H1 (cell line): ENCODE measurements at regions of chr14 and their contacts with region 1.

Region 1: GRCh38 chr14:94136575-94137331 is 7.3 kb upstream of the IFI27L2 start:
- DNase-seq: peak; percentile 75 to 97
- H3K4me3 ChIP-seq: no peak overlapping the region
- H3K27ac ChIP-seq: no peak overlapping the region
- H3K4me1 ChIP-seq: peaks cover 5 to 17% (median 8%) of the 10 kb centered on the region in 4 experiments; a peak in 6 of 7 replicates
- H3K27me3 ChIP-seq: no peaks in the 10 kb centered on the region
- CTCF ChIP-seq: peak; percentile 94 to 99 (median 98)
- EP300 ChIP-seq: no peak
- POLR2A ChIP-seq: no peak
- RAD21 ChIP-seq: peak; percentile 91 to 95

Region 2: GRCh38 chr14:93926873-93927799 is 209.6 kb before region 1 on chr14 and contains the start of gene FAM181A:
- CTCF ChIA-PET with region 1: no interaction called
- POLR2A ChIA-PET with region 1: no interaction called
- DNase-seq: no peak
- H3K4me3 ChIP-seq: no peak within 1 kb of the TSS
- H3K27ac ChIP-seq: no peak within 1 kb of the TSS
- H3K4me1 ChIP-seq: peaks cover 0 to 5% (median 0%) of the 10 kb centered on the region in 4 experiments; a peak in 1 of 7 replicates
- H3K27me3 ChIP-seq: no peaks in the 10 kb centered on the region
- CTCF ChIP-seq: no peak
- EP300 ChIP-seq: no peak
- POLR2A ChIP-seq: no peak
- RAD21 ChIP-seq: no peak
- total RNA-seq, gene FAM181A: not detected in 2 replicates

Region 3: GRCh38 chr14:94021001-94021400 is 115.8 kb before region 1 on chr14:
- CTCF ChIA-PET with region 1: interaction called, 15 read pairs
- POLR2A ChIA-PET with region 1: no interaction called
- DNase-seq: no peak
- H3K4me3 ChIP-seq: no peak overlapping the region
- H3K27ac ChIP-seq: no peak overlapping the region
- H3K4me1 ChIP-seq: peaks cover 0 to 18% (median 10%) of the 10 kb centered on the region in 4 experiments; a peak in 4 of 7 replicates
- H3K27me3 ChIP-seq: no peaks in the 10 kb centered on the region; a peak in 1 of 7 replicates
- CTCF ChIP-seq: no peak
- EP300 ChIP-seq: no peak
- POLR2A ChIP-seq: no peak
- RAD21 ChIP-seq: no peak

Region 4: GRCh38 chr14:94051115-94051514 is 85.6 kb before region 1 on chr14:
- CTCF ChIA-PET with region 1: interaction called, 148 read pairs
- POLR2A ChIA-PET with region 1: no interaction called
- DNase-seq: no peak
- H3K4me3 ChIP-seq: no peak overlapping the region
- H3K27ac ChIP-seq: no peak overlapping the region
- H3K4me1 ChIP-seq: no peaks in the 10 kb centered on the region; a peak in 1 of 7 replicates
- H3K27me3 ChIP-seq: no peaks in the 10 kb centered on the region
- CTCF ChIP-seq: peak; percentile 38 to 52 (median 47)
- EP300 ChIP-seq: no peak
- POLR2A ChIP-seq: no peak
- RAD21 ChIP-seq: peak; percentile 41 to 44; a peak in 3 of 4 replicates

Region 5: DNA sequence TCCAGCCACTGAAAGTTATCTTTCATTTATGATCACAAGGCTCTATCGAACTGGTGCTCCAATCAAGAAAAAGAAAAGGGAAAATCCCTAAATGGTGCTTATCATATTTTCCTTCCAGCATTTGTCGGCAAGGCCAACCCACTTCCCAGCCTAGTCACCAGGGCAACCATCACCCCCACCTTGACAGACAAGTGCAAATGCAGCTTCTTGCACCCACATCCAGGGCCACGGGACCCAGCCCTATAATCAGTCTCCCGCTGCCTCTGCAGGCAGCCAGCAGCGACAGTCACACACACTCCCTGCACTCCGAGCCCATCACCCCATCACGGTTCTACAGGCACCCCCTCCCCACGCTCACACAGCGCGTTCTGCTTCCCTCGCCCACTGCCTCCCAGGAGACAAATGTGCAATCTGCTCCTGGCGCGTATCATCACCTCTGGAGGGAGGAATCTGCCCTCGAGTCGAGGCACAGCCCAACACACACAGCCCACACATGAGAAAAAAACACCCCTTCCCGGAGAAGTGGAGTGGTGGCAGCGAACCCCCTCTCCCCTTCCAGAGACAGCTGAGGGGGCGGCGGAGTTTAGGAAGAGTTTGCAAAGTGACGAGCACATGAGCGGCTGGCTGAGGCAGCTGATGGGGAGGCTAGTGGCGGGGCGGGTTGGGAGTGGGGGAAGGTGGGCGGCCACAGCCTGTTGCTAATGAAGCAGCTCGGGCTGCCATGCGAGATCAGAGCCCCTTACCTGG is 28.1 kb after region 1 on chr14:
- CTCF ChIA-PET with region 1: interaction called, 12 read pairs
- POLR2A ChIA-PET with region 1: no interaction called
- DNase-seq: no peak
- H3K4me3 ChIP-seq: peak overlapping the region in 1 of 4 experiments; percentile 44; a peak in 1 of 8 replicates
- H3K27ac ChIP-seq: no peak overlapping the region
- H3K4me1 ChIP-seq: peaks cover 2 to 18% (median 8%) of the 10 kb centered on the region in 4 experiments
- H3K27me3 ChIP-seq: peaks cover 0 to 5% (median 3%) of the 10 kb centered on the region in 4 experiments; a peak in 3 of 7 replicates
- CTCF ChIP-seq: no peak
- EP300 ChIP-seq: no peak
- POLR2A ChIP-seq: no peak
- RAD21 ChIP-seq: no peak

Region 6: GRCh38 chr14:94239406-94239805 is 102.7 kb after region 1 on chr14:
- CTCF ChIA-PET with region 1: no interaction called
- POLR2A ChIA-PET with region 1: no interaction called
- DNase-seq: no peak
- H3K4me3 ChIP-seq: no peak overlapping the region
- H3K27ac ChIP-seq: no peak overlapping the region
- H3K4me1 ChIP-seq: no peaks in the 10 kb centered on the region
- H3K27me3 ChIP-seq: no peaks in the 10 kb centered on the region
- CTCF ChIP-seq: no peak
- EP300 ChIP-seq: no peak
- POLR2A ChIP-seq: no peak
- RAD21 ChIP-seq: no peak

Region 7: DNA sequence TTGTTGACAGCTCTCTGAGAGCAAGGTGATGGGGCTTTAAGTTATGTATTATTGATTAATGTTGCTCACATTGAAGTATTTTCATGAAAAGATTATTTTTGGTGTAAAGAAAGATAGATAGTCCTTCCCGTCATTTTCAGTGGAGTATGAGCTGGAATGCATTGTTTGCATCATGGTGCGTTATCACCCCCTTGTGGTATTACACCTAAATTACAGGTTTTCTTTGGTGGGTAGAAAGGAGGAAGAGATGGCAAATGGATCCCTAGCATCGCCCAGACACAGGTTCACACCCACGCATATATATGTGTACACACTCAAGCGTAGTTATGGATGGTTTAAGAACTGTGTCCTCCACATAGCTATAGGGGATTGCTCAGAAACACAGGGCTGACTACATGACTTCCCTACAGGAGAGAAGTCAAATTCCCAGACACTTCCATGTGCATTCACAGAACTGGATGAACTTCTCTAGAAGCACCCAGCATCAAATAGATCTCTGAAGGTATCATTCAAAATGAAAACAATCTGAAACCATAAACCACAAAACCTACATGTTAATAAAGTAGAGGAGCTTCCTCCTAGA is 170.7 kb after region 1 on chr14:
- CTCF ChIA-PET with region 1: interaction called, 39 read pairs
- POLR2A ChIA-PET with region 1: no interaction called
- DNase-seq: peak in 1 of 2 experiments; percentile 44
- H3K4me3 ChIP-seq: no peak overlapping the region
- H3K27ac ChIP-seq: no peak overlapping the region
- H3K4me1 ChIP-seq: no peaks in the 10 kb centered on the region
- H3K27me3 ChIP-seq: no peaks in the 10 kb centered on the region
- CTCF ChIP-seq: peak in 2 of 3 experiments; percentile 60 to 76; a peak in 3 of 4 replicates
- EP300 ChIP-seq: no peak
- POLR2A ChIP-seq: no peak
- RAD21 ChIP-seq: peak; percentile 83 to 84

Region 8: DNA sequence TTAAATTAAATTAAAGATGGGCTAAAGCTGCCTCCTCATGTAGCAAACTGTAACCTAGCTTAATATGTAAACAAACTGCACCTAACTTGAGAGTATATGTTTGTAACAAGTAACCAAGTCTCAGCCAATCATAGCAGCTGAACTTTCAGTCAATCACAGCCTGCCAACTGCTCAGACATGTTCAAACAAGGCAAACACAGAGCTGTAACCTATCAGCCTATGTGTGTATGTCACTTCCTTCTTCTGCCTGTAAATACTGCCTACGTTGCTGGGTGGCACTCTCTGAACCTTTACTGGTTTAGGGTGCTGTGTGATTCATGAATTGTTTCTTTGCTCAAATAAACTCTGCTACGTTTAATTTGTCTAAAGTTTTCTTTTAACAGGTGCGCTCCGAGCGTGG is 183.5 kb after region 1 on chr14:
- CTCF ChIA-PET with region 1: no interaction called
- POLR2A ChIA-PET with region 1: no interaction called
- DNase-seq: no peak
- H3K4me3 ChIP-seq: no peak overlapping the region
- H3K27ac ChIP-seq: no peak overlapping the region
- H3K4me1 ChIP-seq: no peaks in the 10 kb centered on the region
- H3K27me3 ChIP-seq: no peaks in the 10 kb centered on the region
- CTCF ChIP-seq: no peak
- EP300 ChIP-seq: no peak
- POLR2A ChIP-seq: no peak
- RAD21 ChIP-seq: no peak